ENCODE measurements at regions of chr15 and their contacts with region 1.

Region 1: DNA sequence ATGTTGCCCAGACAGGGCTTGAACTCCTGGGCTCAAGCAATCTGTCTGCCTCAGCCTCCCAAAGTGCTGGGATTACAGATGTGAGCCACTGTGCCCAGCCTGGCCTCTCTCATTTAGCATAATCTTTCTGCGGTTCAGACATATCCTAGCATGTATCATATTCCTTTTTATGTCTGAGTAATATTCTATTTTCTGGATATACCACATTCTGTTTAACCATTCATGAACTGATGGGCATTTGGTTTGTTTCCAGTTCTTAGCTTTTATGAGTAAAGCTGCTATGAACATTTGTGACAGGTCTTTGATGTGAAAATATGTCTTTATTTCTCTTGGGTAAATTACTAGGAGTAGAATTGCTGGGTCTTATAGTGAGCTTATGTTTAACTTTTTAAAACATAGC is 23.5 kb downstream of the FAM81A start:
- DNase-seq: no peak
- H3K4me3 ChIP-seq: no peak overlapping the region
- H3K27ac ChIP-seq: no peak overlapping the region
- H3K4me1 ChIP-seq: no peaks in the 10 kb centered on the region
- H3K27me3 ChIP-seq: no peaks in the 10 kb centered on the region
- CTCF ChIP-seq: no peak

Region 2: DNA sequence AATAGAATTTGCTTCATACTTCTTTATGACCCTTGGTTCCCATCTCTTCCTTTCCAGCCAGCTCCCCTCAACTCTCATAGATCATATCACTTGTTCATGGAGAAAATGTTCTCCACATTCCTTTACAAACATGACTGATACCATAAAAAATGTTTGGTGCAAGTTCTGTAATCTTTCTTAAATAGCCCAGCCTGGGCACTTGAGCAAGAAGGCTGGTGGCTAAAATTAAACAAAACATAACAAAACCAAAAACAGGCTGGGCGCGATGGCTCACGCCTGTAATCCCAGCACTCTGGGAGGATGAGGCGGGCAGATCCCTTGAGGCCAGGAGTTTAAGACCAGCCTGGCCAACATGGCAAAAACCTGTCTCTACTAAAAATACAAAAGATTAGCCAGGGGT is 1763.9 kb before region 1 on chr15:
- intact Hi-C with region 1: loop called (anchors 5 kb)
- DNase-seq: no peak
- H3K4me3 ChIP-seq: no peak overlapping the region
- H3K27ac ChIP-seq: no peak overlapping the region
- H3K4me1 ChIP-seq: peaks cover 29% of the 10 kb centered on the region
- H3K27me3 ChIP-seq: no peaks in the 10 kb centered on the region
- CTCF ChIP-seq: no peak

Region 3: GRCh38 chr15:59002418-59002859 is 459.1 kb before region 1 on chr15:
- intact Hi-C with region 1: no loop called
- DNase-seq: no peak
- H3K4me3 ChIP-seq: no peak overlapping the region
- H3K27ac ChIP-seq: no peak overlapping the region
- H3K4me1 ChIP-seq: peaks cover 25% of the 10 kb centered on the region
- H3K27me3 ChIP-seq: no peaks in the 10 kb centered on the region
- CTCF ChIP-seq: no peak

Region 4: GRCh38 chr15:59329570-59330350 is 131.8 kb before region 1 on chr15:
- intact Hi-C with region 1: no loop called
- DNase-seq: no peak
- H3K4me3 ChIP-seq: no peak overlapping the region
- H3K27ac ChIP-seq: no peak overlapping the region
- H3K4me1 ChIP-seq: peaks cover 36% of the 10 kb centered on the region
- H3K27me3 ChIP-seq: no peaks in the 10 kb centered on the region
- CTCF ChIP-seq: no peak

Region 5: GRCh38 chr15:59372352-59373211 is 88.9 kb before region 1 on chr15 and contains the start of gene MYO1E:
- intact Hi-C with region 1: no loop called
- DNase-seq: peak; percentile 81
- H3K4me3 ChIP-seq: peak within 1 kb of the TSS; percentile 98
- H3K27ac ChIP-seq: peak within 1 kb of the TSS; percentile 97
- H3K4me1 ChIP-seq: peaks cover 38% of the 10 kb centered on the region
- H3K27me3 ChIP-seq: no peaks in the 10 kb centered on the region
- CTCF ChIP-seq: no peak
- total RNA-seq, gene MYO1E: 23.6 TPM

Region 6: DNA sequence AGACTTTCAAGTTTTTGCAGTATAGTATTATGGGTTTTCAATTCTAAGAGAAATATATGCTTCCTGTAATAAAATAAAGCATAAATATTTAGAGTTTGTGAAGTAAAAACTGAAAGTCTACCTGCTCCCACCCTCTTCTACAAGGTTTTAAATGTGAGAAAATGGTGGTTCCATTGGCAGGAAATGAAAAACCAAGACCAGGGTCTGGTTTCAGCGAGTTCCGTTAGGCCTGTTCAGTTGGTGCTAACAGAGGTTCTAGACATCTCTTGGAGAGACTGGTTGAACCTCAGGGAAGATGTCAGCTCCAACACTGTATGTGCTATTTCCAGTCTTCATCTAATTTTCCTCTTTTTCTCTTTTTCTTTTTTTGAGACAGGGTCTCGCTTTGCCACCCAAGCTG is 77.0 kb before region 1 on chr15:
- intact Hi-C with region 1: no loop called
- DNase-seq: no peak
- H3K4me3 ChIP-seq: no peak overlapping the region
- H3K27ac ChIP-seq: no peak overlapping the region
- H3K4me1 ChIP-seq: no peaks in the 10 kb centered on the region
- H3K27me3 ChIP-seq: no peaks in the 10 kb centered on the region
- CTCF ChIP-seq: no peak

Measured in left ventricle myocardium inferior (tissue), 1 donor.